Activated CD4-positive, alpha-beta T cell treated with anti-CD3 and anti-CD28 coated beads, Interleukin-2, amount 10 ng/mL, durations not matched to agents 24 days and 14 days (primary cell): ENCODE measurements at regions of chr5 and their contacts with region 1.

Region 1: GRCh38 chr5:95718203-95718602 is 12.9 kb upstream of the RHOBTB3 start:
- DNase-seq: peak; percentile 78
- H3K4me3 Mint-ChIP-seq: no peak overlapping the region
- H3K27ac Mint-ChIP-seq: no peak overlapping the region
- H3K4me1 Mint-ChIP-seq: peaks cover 22% of the 10 kb centered on the region
- H3K27me3 Mint-ChIP-seq: peaks cover 29% of the 10 kb centered on the region

Region 2: GRCh38 chr5:95591490-95591901 is 126.7 kb before region 1 on chr5:
- intact Hi-C with region 1: loop called (anchors 1 kb)
- DNase-seq: no peak
- H3K4me3 Mint-ChIP-seq: no peak overlapping the region
- H3K27ac Mint-ChIP-seq: peak overlapping the region; percentile 39
- H3K4me1 Mint-ChIP-seq: peaks cover 20% of the 10 kb centered on the region
- H3K27me3 Mint-ChIP-seq: no peaks in the 10 kb centered on the region

Region 3: GRCh38 chr5:95704150-95704549 is 14.1 kb before region 1 on chr5:
- intact Hi-C with region 1: no loop called
- DNase-seq: no peak
- H3K4me3 Mint-ChIP-seq: no peak overlapping the region
- H3K27ac Mint-ChIP-seq: no peak overlapping the region
- H3K4me1 Mint-ChIP-seq: no peaks in the 10 kb centered on the region
- H3K27me3 Mint-ChIP-seq: peaks cover 44% of the 10 kb centered on the region

Region 4: GRCh38 chr5:95731571-95732554 is 13.7 kb after region 1 on chr5:
- intact Hi-C with region 1: loop called (anchors 1 kb)
- DNase-seq: peak; percentile 74
- H3K4me3 Mint-ChIP-seq: peak overlapping the region; percentile 81
- H3K27ac Mint-ChIP-seq: no peak overlapping the region
- H3K4me1 Mint-ChIP-seq: peaks cover 19% of the 10 kb centered on the region
- H3K27me3 Mint-ChIP-seq: peaks cover 68% of the 10 kb centered on the region

Region 5: DNA sequence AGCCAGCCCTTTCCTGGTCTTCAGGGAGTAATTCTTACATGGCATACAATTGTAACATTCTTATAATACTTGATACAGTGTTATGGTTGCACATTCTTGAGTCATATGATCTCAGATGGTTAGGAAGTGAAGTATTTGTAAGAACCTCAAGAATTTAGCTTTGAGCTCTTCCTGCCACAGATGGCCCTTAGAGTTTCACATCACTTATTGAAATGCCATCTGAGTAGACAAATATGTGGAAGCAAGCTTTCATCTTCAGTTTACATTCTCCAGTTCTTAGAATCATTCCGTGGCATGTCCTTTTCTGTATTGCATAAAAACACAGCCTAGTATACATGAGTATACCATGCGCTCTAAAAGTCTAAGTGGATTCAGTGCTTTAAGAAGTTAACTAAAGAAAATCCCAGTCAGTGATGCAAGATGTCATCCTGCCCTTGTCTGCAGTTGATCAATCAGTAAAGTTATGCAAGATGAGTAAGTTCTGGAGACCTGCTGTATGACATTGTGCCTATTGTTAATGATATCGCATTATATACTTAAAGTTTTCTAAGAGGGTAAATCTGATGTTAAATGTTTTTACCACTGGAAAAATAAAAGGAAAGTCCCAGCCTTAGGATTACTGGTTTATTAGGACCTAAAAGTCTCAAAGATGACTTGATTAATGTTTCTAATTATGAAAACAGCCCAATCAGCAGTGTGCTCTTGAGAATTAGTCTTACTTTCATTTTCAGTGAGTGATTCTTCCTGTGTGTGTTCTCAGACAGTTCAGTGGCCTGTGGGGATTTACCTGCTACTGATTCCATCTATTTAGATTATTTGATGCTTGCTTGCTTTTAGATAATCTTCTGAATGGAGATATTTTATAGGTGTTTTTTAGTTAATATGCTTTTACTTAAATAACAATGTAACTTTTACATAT is 42.3 kb after region 1 on chr5:
- intact Hi-C with region 1: loop called (anchors 1 kb)
- DNase-seq: no peak
- H3K4me3 Mint-ChIP-seq: peak overlapping the region; percentile 68
- H3K27ac Mint-ChIP-seq: peak overlapping the region; percentile 77
- H3K4me1 Mint-ChIP-seq: peaks cover 23% of the 10 kb centered on the region
- H3K27me3 Mint-ChIP-seq: peaks cover 42% of the 10 kb centered on the region

Region 6: GRCh38 chr5:95846554-95847260 is 128.5 kb after region 1 on chr5:
- intact Hi-C with region 1: loop called (anchors 5 kb)
- DNase-seq: peak; percentile 90
- H3K4me3 Mint-ChIP-seq: no peak overlapping the region
- H3K27ac Mint-ChIP-seq: no peak overlapping the region
- H3K4me1 Mint-ChIP-seq: peaks cover 27% of the 10 kb centered on the region
- H3K27me3 Mint-ChIP-seq: peaks cover 16% of the 10 kb centered on the region

Region 7: GRCh38 chr5:96344678-96345577 is 626.7 kb after region 1 on chr5:
- intact Hi-C with region 1: loop called (anchors 10 kb)
- DNase-seq: peak; percentile 79
- H3K4me3 Mint-ChIP-seq: peak overlapping the region; percentile 2
- H3K27ac Mint-ChIP-seq: no peak overlapping the region
- H3K4me1 Mint-ChIP-seq: peaks cover 24% of the 10 kb centered on the region
- H3K27me3 Mint-ChIP-seq: peaks cover 35% of the 10 kb centered on the region

Region 8: DNA sequence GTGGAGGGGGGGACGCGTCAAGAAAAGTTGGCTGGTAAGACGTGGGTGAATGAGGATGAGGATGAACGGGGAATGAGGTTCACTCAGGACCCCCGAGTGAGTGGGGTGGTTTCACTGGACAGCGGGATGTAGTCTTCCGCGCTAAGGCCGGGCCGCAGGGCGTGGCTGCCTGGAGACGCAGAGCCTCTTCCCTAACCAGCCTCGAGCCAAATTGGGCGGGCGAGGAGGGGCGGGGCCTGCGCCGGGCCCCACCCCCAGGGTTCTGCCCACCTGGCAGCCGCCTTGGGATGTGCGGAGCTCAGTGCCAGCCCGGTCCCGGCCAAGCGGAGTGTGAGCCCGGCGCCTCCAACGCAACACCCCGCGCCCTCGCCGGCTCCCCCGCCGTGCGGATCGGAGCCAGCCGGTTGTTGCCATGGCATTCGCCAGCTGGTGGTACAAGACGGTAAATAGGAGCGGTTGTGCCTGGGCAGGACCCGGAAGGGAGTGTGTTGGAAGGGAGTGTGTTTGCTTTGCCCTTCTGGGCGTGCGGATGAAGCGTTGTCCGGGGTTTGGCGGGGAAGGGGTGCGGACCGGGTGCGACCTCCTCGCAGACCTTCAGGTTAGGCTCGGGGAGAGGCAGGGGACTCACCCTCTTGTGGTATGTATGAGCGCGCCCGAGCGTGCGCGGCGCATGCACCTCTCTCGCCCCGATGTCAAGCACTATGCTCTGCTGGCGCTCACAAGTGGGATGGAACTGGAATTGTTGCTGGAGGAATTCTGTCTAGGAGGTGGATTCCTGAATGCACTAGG is 944.7 kb after region 1 on chr5:
- intact Hi-C with region 1: loop called (anchors 5 kb)
- DNase-seq: peak; percentile 96
- H3K4me3 Mint-ChIP-seq: peak overlapping the region; percentile 99
- H3K27ac Mint-ChIP-seq: peak overlapping the region; percentile 99
- H3K4me1 Mint-ChIP-seq: peaks cover 49% of the 10 kb centered on the region
- H3K27me3 Mint-ChIP-seq: peaks cover 12% of the 10 kb centered on the region